ENCODE measurements at regions of chr3 and their contacts with region 1.

Region 1: DNA sequence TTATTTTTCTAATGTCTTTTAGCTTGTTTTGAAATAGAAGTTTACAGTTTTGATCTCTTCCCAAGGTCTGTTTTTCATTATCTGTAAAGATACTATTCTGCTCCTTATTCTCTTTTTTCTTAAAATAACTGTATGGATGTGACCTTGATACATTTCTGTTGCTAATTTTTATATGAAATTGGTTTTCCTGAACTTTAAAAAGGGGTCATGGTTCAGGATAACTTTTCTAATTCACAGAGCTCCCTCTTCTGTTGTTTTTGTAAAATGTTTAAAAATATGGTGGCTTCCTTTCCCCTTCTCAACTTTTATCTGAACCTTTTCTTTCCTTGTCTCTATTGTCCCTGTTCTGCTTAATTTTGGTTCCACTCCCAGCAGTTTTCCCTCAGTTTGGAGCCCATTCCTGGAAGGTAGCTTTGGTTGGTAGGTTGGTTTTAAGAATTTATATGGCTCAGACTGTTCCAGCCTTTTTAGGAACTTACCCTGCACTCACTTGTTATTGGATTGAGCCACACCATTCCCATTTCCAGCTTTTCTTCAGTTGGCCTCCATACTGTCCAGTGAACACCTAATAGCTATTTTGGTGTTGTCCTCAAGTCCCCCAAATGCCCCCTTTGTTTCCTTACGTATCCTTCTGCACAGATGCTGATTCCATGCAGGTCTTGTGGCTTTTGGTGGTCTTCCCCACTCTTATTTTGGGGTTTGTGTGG is 70.3 kb downstream of the SLMAP start:
- DNase-seq: no peak
- H3K4me3 ChIP-seq: no peak overlapping the region
- H3K27ac ChIP-seq: no peak overlapping the region
- H3K4me1 ChIP-seq: no peaks in the 10 kb centered on the region
- H3K27me3 ChIP-seq: no peaks in the 10 kb centered on the region
- CTCF ChIP-seq: no peak
- POLR2A ChIP-seq: no peak

Region 2: DNA sequence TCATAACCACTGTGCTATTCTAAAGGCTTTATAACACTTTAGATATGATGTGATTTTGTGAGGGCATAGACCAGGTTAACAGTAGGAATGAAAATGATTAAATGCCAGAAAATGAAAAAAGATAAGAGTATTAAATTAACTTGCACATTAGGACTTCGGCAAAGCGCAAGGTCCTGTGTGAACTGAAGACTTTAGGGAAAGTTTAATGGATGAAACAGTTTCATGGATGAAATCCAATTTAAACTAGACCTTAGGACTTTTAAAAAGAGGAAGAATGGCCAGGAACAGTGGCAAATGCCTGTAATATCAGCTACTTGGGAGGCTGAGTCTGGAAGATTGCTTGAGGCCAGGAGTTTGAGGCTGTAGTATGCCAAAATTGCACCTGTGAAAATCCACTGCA is 61.6 kb before region 1 on chr3:
- intact Hi-C with region 1: loop called (anchors 10 kb)
- DNase-seq: no peak
- H3K4me3 ChIP-seq: no peak overlapping the region
- H3K27ac ChIP-seq: no peak overlapping the region
- H3K4me1 ChIP-seq: no peaks in the 10 kb centered on the region
- H3K27me3 ChIP-seq: no peaks in the 10 kb centered on the region
- CTCF ChIP-seq: no peak
- POLR2A ChIP-seq: no peak